T-cell (primary cell): ENCODE measurements at regions of chr6 and their contacts with region 1.

Region 1: GRCh38 chr6:138545621-138545980 is 46.3 kb upstream of the NHSL1 start:
- DNase-seq: no peak
- ATAC-seq: no peak
- H3K4me3 ChIP-seq: no peak overlapping the region
- H3K4me3 Mint-ChIP-seq: no peak overlapping the region
- H3K27ac ChIP-seq: no peak overlapping the region
- H3K27ac Mint-ChIP-seq: no peak overlapping the region
- H3K4me1 ChIP-seq: no peaks in the 10 kb centered on the region
- H3K4me1 Mint-ChIP-seq: peaks cover 0 to 4% (median 4%) of the 10 kb centered on the region in 3 donors
- H3K27me3 ChIP-seq: peaks cover 0 to 4% of the 10 kb centered on the region in 2 experiments
- H3K27me3 Mint-ChIP-seq: peaks cover 14 to 15% of the 10 kb centered on the region in 2 donors

Region 2: GRCh38 chr6:138336221-138336620 is 209.4 kb before region 1 on chr6:
- CTCF ChIA-PET with region 1: no interaction called
- POLR2A ChIA-PET with region 1: interaction called in 1 of 2 experiments, 10 read pairs
- DNase-seq: no peak
- ATAC-seq: no peak
- H3K4me3 ChIP-seq: no peak overlapping the region
- H3K4me3 Mint-ChIP-seq: no peak overlapping the region
- H3K27ac ChIP-seq: no peak overlapping the region
- H3K27ac Mint-ChIP-seq: no peak overlapping the region
- H3K4me1 ChIP-seq: no peaks in the 10 kb centered on the region
- H3K4me1 Mint-ChIP-seq: no peaks in the 10 kb centered on the region
- H3K27me3 ChIP-seq: peaks cover 0 to 11% of the 10 kb centered on the region in 2 experiments
- H3K27me3 Mint-ChIP-seq: peaks cover 15 to 26% of the 10 kb centered on the region in 2 donors

Region 3: GRCh38 chr6:138485005-138485545 is 60.5 kb before region 1 on chr6:
- CTCF ChIA-PET with region 1: no interaction called
- POLR2A ChIA-PET with region 1: no interaction called
- DNase-seq: no peak
- ATAC-seq: no peak
- H3K4me3 ChIP-seq: no peak overlapping the region
- H3K4me3 Mint-ChIP-seq: no peak overlapping the region
- H3K27ac ChIP-seq: no peak overlapping the region
- H3K27ac Mint-ChIP-seq: no peak overlapping the region
- H3K4me1 ChIP-seq: no peaks in the 10 kb centered on the region
- H3K4me1 Mint-ChIP-seq: no peaks in the 10 kb centered on the region
- H3K27me3 ChIP-seq: no peaks in the 10 kb centered on the region
- H3K27me3 Mint-ChIP-seq: peaks cover 2 to 8% of the 10 kb centered on the region in 2 donors